ENCODE measurements at regions of chr1 and their contacts with region 1.

Region 1: GRCh38 chr1:45011837-45012638 is at the start of gene UROD:
- DNase-seq: peak; percentile 92
- H3K4me3 ChIP-seq: peak within 1 kb of the TSS; percentile 92
- H3K27ac ChIP-seq: peak within 1 kb of the TSS; percentile 82
- H3K27me3 ChIP-seq: no peaks in the 10 kb centered on the region
- CTCF ChIP-seq: no peak
- polyA plus RNA-seq, gene UROD: 185 and 226 TPM in 2 replicates

Region 2: GRCh38 chr1:44819608-44820327 is 192.3 kb before region 1 on chr1:
- CTCF ChIA-PET with region 1: interaction called, 3 read pairs
- POLR2A ChIA-PET with region 1: interaction called, 23 read pairs
- DNase-seq: peak; percentile 89
- H3K4me3 ChIP-seq: peak overlapping the region; percentile 62
- H3K27ac ChIP-seq: peak overlapping the region; percentile 99
- H3K27me3 ChIP-seq: no peaks in the 10 kb centered on the region
- CTCF ChIP-seq: no peak

Region 3: DNA sequence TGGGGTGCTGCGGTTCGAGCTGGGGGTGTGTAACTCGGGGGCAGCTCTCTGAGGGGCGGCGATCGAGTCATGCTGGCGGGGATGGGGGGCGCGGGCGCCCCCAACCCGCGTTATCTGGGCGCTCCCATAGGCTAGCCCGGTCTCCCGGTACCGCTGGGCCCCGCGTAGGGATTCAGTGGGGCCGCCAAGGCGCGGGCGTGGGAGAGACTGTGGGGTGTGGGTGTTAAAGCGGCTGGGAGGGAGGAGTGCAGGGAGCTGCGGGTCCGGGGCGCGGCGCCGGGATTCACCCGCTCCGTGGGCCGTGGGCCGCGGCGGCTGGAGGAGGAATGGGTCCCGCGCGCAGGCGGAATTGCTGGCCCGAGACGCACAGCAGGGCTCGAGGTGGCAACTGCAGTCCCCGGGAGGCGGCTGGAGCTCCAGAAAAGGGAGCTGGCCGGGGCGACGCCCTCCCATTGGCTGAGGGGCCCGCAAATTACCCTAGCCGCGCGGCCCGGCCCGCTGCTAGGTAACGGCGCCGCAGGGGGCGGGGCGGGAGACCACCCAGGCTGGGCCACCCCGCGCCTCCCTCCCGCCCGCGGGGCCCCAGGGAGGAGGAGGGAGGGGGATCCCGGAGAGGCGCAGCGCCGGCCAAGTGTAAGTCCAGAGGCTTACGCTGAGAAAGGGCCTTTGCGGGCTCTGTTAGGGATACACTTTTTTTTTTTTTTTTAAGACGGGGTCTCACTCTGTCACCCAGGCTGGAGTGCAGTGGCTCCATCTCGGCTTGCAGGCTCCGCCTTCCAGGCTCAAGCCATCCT is 169.0 kb before region 1 on chr1 and contains the start of gene PTCH2:
- CTCF ChIA-PET with region 1: interaction called, 12 read pairs
- POLR2A ChIA-PET with region 1: interaction called, 3 read pairs
- DNase-seq: peak; percentile 20
- H3K4me3 ChIP-seq: peak within 1 kb of the TSS; percentile 64
- H3K27ac ChIP-seq: no peak within 1 kb of the TSS
- H3K27me3 ChIP-seq: no peaks in the 10 kb centered on the region
- CTCF ChIP-seq: no peak
- polyA plus RNA-seq, gene PTCH2: 0.20 and 0.36 TPM in 2 replicates

Region 4: DNA sequence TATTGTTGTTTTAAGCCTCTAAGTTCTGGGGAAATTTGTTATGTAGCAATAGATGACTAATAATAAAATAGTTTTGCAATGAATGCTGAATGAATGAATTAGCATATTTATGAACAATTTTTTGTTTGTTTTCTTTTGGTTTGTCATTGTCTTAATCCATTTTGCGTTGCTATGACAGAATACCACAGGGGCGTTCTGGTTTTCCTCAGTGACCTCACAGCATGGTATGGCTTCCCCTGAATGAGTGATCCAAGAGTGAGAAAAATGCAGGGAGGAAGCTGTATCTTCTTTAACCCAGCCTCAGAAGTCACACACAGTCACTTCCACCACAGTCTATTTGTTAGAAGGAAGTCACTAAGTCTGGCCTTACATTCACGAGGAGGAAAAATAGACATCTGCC is 260.9 kb after region 1 on chr1:
- CTCF ChIA-PET with region 1: interaction called, 10 read pairs
- POLR2A ChIA-PET with region 1: no interaction called
- DNase-seq: peak; percentile 26
- H3K4me3 ChIP-seq: no peak overlapping the region
- H3K27ac ChIP-seq: peak overlapping the region; percentile 66
- H3K27me3 ChIP-seq: no peaks in the 10 kb centered on the region
- CTCF ChIP-seq: no peak

Region 5: GRCh38 chr1:45339789-45340570 is 327.9 kb after region 1 on chr1 and contains the starts of genes MUTYH and TOE1:
- CTCF ChIA-PET with region 1: interaction called, 37 read pairs
- POLR2A ChIA-PET with region 1: interaction called, 19 read pairs
- DNase-seq: peak; percentile 70
- H3K4me3 ChIP-seq: peak within 1 kb of the TSS; percentile 73
- H3K27ac ChIP-seq: peak within 1 kb of the TSS; percentile 94
- H3K27me3 ChIP-seq: no peaks in the 10 kb centered on the region
- CTCF ChIP-seq: peak; percentile 11; the same call in 1 of the 2 replicates
- polyA plus RNA-seq, gene MUTYH: 5.8 and 6.2 TPM in 2 replicates
- polyA plus RNA-seq, gene TOE1: 8.1 and 10.1 TPM in 2 replicates

Region 6: GRCh38 chr1:45359882-45360513 is 348.0 kb after region 1 on chr1:
- CTCF ChIA-PET with region 1: interaction called, 42 read pairs
- POLR2A ChIA-PET with region 1: no interaction called
- DNase-seq: peak; percentile 38
- H3K4me3 ChIP-seq: no peak overlapping the region
- H3K27ac ChIP-seq: no peak overlapping the region
- H3K27me3 ChIP-seq: no peaks in the 10 kb centered on the region
- CTCF ChIP-seq: peak; percentile 74

Region 7: DNA sequence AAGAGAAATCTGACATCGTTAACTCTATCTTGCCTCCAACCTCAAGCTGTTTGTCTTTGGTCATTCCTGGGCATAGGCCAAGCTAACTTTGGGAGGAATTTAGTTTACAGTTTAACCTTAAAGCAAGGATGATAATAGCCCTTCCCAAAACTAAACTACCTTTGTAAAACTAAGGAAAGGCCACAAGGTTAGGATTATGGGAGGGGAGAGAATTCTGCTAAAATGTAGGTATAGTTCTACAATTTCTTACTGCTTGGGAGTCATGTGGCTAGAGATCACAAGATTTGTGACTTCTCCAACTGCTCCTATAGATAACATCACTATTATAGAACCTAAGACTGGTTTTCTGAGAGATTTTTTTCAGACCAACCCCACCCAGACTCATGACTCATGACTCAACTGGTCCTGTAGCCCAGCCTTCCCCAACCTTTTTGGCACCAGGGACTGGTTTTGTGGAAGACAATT is 398.8 kb after region 1 on chr1:
- CTCF ChIA-PET with region 1: no interaction called
- POLR2A ChIA-PET with region 1: no interaction called
- DNase-seq: no peak
- H3K4me3 ChIP-seq: no peak overlapping the region
- H3K27ac ChIP-seq: no peak overlapping the region
- H3K27me3 ChIP-seq: peaks cover 2% of the 10 kb centered on the region
- CTCF ChIP-seq: no peak

Measured in AG04450 (cell line).